Panc1 (cell line): ENCODE measurements at regions of chr16 and their contacts with region 1.

Region 1: DNA sequence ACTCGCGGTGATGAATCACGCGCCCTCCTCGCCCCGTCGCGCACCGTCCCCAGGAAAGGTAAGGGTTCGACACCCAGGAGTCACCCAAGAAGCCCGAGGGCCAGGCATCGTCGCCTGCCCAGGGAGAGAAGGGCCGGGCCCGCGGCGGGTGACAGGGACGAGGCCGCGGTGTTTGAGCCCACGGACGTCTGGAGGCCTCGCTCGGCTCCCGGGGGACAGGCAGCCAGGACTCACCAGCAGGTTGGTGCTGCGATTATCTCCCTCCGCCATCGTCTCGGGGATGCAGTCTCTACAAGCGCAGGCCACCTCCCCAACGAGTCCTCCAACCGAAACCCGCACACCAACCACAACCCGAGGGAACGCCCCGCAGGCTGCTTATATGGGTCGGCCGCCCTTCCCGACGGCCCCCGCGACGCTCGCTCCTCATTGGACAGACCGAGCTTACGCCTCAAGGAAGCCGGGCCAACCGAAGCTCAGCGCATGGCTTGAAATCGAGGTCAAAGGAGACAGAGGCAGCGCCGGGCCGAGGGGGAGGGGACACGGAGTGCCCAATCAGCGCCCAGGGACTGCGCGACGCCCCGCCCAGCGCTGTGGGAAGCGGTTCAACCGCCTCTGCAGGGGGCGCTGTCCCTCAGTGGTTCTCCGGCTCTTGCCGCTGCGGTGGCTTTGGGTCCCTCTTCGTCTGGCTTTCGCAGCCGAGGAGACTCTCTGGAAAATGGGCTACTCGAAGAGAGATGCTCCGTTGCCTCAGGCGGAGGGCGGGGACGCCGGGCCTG is at the start of gene ARL6IP1:
- DNase-seq: peak; percentile 98
- ATAC-seq: peak; percentile 97
- H3K4me3 ChIP-seq: peak within 1 kb of the TSS; percentile 90 to 94
- H3K27ac ChIP-seq: peak within 1 kb of the TSS; percentile 93
- H3K4me1 ChIP-seq: peaks cover 52% of the 10 kb centered on the region
- H3K27me3 ChIP-seq: no peaks in the 10 kb centered on the region
- CTCF ChIP-seq: peak; percentile 98
- total RNA-seq, gene ARL6IP1: 343 TPM

Region 2: DNA sequence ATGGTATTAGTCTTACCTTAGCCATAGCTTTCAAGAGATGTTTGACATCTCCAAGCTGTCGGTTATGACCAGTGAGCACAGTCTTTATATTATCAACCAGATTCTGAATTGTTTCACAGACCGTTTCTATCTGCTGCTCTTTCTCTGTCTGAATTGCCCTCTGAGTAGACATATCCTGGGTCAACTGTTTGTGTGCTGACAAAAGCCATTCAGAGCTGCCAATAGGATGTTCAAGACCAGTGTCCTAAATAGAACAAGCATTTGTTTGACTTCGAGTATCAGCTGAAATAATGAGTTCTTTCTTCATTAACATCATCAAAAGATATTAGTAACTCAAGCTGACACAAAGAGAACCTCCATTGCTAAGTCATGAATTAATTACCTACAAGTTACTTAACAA is 14.9 kb after region 1 on chr16:
- CTCF ChIA-PET with region 1: interaction called, 4 read pairs
- POLR2A ChIA-PET with region 1: interaction called, 10 read pairs
- in situ Hi-C with region 1: no loop called
- intact Hi-C with region 1: no loop called
- DNase-seq: no peak
- ATAC-seq: no peak
- H3K4me3 ChIP-seq: no peak overlapping the region
- H3K27ac ChIP-seq: no peak overlapping the region
- H3K4me1 ChIP-seq: no peaks in the 10 kb centered on the region
- H3K27me3 ChIP-seq: no peaks in the 10 kb centered on the region
- CTCF ChIP-seq: no peak

Region 3: DNA sequence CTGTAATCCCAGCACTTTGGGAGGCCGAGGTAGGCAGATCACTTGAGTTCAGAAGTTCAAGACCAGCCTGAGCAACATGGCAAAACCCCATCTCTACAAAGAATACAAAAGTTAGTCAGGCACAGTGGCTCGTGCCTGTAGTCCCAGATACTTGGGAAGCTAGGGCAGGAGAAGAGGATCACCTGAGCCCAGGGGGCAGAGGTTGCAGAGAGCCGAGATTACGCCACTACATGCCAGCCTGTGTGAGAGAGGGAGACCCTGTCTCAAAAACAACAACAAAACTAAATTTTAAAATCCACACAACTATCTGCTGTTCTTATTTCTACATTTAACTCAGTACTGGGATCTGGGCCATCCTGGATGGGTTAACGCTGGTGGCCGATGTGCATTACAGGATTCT is 41.2 kb after region 1 on chr16:
- CTCF ChIA-PET with region 1: no interaction called
- POLR2A ChIA-PET with region 1: no interaction called
- in situ Hi-C with region 1: no loop called
- intact Hi-C with region 1: no loop called
- DNase-seq: no peak
- ATAC-seq: no peak
- H3K4me3 ChIP-seq: no peak overlapping the region
- H3K27ac ChIP-seq: no peak overlapping the region
- H3K4me1 ChIP-seq: no peaks in the 10 kb centered on the region
- H3K27me3 ChIP-seq: no peaks in the 10 kb centered on the region
- CTCF ChIP-seq: no peak

Region 4: GRCh38 chr16:18969050-18969854 is 167.9 kb after region 1 on chr16:
- CTCF ChIA-PET with region 1: no interaction called
- POLR2A ChIA-PET with region 1: interaction called, 3 read pairs
- in situ Hi-C with region 1: no loop called
- intact Hi-C with region 1: loop called (anchors 2 kb)
- DNase-seq: no peak
- ATAC-seq: peak; percentile 98
- H3K4me3 ChIP-seq: peak overlapping the region; percentile 27 to 42
- H3K27ac ChIP-seq: no peak overlapping the region
- H3K4me1 ChIP-seq: peaks cover 4% of the 10 kb centered on the region; the same call in 1 of the 2 replicates
- H3K27me3 ChIP-seq: no peaks in the 10 kb centered on the region
- CTCF ChIP-seq: peak; percentile 99

Region 5: GRCh38 chr16:19029980-19030379 is 228.6 kb after region 1 on chr16:
- CTCF ChIA-PET with region 1: no interaction called
- POLR2A ChIA-PET with region 1: no interaction called
- in situ Hi-C with region 1: no loop called
- intact Hi-C with region 1: no loop called
- DNase-seq: no peak
- ATAC-seq: no peak
- H3K4me3 ChIP-seq: no peak overlapping the region
- H3K27ac ChIP-seq: no peak overlapping the region
- H3K4me1 ChIP-seq: no peaks in the 10 kb centered on the region
- H3K27me3 ChIP-seq: no peaks in the 10 kb centered on the region
- CTCF ChIP-seq: no peak

Region 6: DNA sequence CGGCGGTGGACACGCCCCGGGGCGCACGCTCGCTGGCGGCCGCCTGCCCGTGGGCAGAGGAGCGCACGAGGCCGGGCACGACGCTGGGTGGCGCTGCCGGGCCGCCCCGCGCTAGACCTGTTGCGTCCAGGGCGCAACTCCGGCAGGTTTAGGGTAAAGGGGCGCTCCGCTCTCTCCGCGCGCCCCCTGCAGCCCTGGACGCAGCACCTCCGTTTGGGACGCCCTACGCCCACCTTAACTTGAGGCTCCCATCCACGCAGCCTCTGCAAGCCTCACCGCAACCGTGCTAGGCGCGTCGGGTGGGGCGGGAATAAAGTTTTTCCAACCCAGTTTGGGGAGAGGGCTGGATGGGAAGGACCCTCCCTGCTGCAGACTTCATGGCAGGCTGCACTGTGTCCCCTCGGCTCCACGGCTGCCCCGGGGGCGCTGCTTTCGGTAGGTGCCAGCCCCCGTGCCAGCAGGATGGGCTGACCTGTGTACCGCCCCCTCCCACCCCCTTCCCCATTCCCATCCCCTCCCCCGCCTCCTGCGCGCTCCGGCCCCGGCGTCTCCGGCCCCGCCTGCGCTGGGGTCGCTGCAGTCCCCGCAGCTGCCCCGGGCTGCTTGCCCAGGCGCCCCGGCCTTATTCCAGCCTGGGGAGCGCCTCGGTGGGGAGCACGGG is 366.5 kb after region 1 on chr16 and contains the start of gene SYT17:
- CTCF ChIA-PET with region 1: no interaction called
- POLR2A ChIA-PET with region 1: no interaction called
- in situ Hi-C with region 1: no loop called
- intact Hi-C with region 1: no loop called
- DNase-seq: no peak
- ATAC-seq: peak; percentile 94
- H3K4me3 ChIP-seq: peak within 1 kb of the TSS; percentile 56 to 73
- H3K27ac ChIP-seq: no peak within 1 kb of the TSS
- H3K4me1 ChIP-seq: 0 out of 2 replicates have a peak, but pooled peaks cover 6% of the 10 kb centered on the region
- H3K27me3 ChIP-seq: no peaks in the 10 kb centered on the region; the same call in none of the 2 replicates
- CTCF ChIP-seq: peak; percentile 98
- total RNA-seq, gene SYT17: 5.4 TPM

Region 7: GRCh38 chr16:19252904-19253303 is 451.5 kb after region 1 on chr16:
- CTCF ChIA-PET with region 1: no interaction called
- POLR2A ChIA-PET with region 1: interaction called, 12 read pairs
- in situ Hi-C with region 1: no loop called
- intact Hi-C with region 1: no loop called
- DNase-seq: no peak
- ATAC-seq: no peak
- H3K4me3 ChIP-seq: no peak overlapping the region
- H3K27ac ChIP-seq: no peak overlapping the region
- H3K4me1 ChIP-seq: no peaks in the 10 kb centered on the region
- H3K27me3 ChIP-seq: peaks cover 8% of the 10 kb centered on the region
- CTCF ChIP-seq: no peak